Activated T-helper 1 cell treated with anti-CD3 and anti-CD28 coated beads, Interleukin-12 subunit alpha, Interleukin-12 subunit beta, Interleukin-2, Interleukin-4 antibody, amounts not matched to agents 30 ng/mL and 10 ng/mL and 1 ng/mL, durations not matched to agents 14 hours and 24 hours and 36 hours (primary cell): ENCODE measurements at regions of chr10 and their contacts with region 1.

Region 1: GRCh38 chr10:79195091-79195923 is 126.5 kb downstream of the ZMIZ1 start:
- DNase-seq: peak; percentile 67
- H3K4me3 Mint-ChIP-seq: no peak overlapping the region
- H3K27ac Mint-ChIP-seq: no peak overlapping the region
- H3K4me1 Mint-ChIP-seq: peaks cover 6% of the 10 kb centered on the region
- H3K27me3 Mint-ChIP-seq: peaks cover 3% of the 10 kb centered on the region

Region 2: GRCh38 chr10:77846718-77847630 is 1348.3 kb before region 1 on chr10:
- intact Hi-C with region 1: loop called (anchors 2 kb)
- DNase-seq: peak; percentile 37
- H3K4me3 Mint-ChIP-seq: no peak overlapping the region
- H3K27ac Mint-ChIP-seq: no peak overlapping the region
- H3K4me1 Mint-ChIP-seq: peaks cover 5% of the 10 kb centered on the region
- H3K27me3 Mint-ChIP-seq: no peaks in the 10 kb centered on the region

Region 3: DNA sequence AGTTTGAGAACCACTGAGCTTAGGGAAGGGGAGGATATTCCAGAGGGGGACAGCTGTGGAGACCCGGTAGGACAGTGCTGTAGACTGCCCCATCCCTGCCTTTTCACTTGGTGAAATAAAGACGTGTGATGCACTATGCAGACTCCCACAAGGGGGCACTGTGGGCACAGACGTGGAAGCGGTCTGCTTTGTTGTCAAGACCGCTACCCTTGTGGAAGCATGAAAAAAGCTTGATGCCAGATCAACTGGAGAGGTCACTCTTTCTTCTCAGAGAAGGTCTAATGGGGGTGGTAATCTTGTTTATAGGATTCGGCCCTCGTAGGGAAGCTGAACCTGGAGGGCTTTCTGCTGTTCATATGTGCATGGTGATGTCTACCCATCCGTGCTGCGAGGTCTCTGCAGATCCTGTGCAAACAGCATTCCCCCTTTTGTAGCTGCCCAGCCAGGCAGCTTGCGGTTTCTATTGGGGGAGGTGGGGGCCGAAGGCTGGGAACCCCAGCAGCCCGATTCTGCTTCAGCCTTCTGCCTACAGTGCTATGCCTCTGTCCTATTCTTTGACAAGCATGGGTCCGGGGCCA is 1147.9 kb before region 1 on chr10:
- intact Hi-C with region 1: loop called (anchors 1 kb)
- DNase-seq: peak; percentile 61
- H3K4me3 Mint-ChIP-seq: no peak overlapping the region
- H3K27ac Mint-ChIP-seq: no peak overlapping the region
- H3K4me1 Mint-ChIP-seq: peaks cover 30% of the 10 kb centered on the region
- H3K27me3 Mint-ChIP-seq: no peaks in the 10 kb centered on the region

Region 4: DNA sequence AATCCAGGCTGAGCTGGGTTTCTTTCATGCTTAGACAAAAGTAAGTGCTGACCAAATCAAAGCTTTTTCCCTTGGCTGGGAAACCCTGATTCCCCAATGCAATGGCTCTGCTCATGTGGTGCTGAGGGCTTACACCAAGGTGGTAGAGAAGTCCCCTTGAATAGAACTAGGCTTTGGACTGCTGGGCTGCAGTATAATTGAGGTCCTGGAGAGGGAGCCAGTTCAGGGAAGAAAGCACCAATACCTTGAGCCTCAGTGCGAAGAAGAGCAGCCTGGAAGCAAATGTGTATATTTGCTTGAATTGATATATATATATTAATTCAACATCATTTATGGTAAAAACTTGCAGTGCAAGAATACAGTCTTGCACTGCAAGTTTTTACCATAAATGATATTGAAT is 770.6 kb before region 1 on chr10:
- intact Hi-C with region 1: loop called (anchors 1 kb)
- DNase-seq: no peak
- H3K4me3 Mint-ChIP-seq: no peak overlapping the region
- H3K27ac Mint-ChIP-seq: no peak overlapping the region
- H3K4me1 Mint-ChIP-seq: no peaks in the 10 kb centered on the region
- H3K27me3 Mint-ChIP-seq: peaks cover 20% of the 10 kb centered on the region

Region 5: DNA sequence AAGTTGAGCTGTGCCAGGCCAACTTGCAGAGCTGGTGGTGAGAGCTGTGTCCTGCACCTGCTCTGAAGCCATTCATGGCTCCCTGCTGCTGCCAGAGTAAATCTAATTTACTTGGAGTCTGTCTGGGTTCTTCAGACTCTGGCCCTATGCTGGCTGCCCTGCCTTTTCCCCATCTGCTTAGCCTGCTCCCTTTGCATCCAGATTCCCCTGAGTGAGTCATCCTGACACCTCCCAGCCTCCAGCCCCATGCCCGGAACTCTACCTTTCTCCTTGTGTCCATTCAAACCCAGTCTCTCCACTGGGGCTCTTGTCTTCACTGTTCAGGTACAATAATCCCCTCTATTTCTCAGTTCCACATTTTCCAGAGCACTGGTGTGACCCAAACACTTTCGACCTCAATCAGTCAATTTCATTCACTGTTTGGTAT is 560.9 kb before region 1 on chr10:
- intact Hi-C with region 1: no loop called
- DNase-seq: no peak
- H3K4me3 Mint-ChIP-seq: no peak overlapping the region
- H3K27ac Mint-ChIP-seq: no peak overlapping the region
- H3K4me1 Mint-ChIP-seq: no peaks in the 10 kb centered on the region
- H3K27me3 Mint-ChIP-seq: peaks cover 2% of the 10 kb centered on the region

Region 6: GRCh38 chr10:78657163-78657861 is 538.0 kb before region 1 on chr10:
- intact Hi-C with region 1: loop called (anchors 1 kb)
- DNase-seq: peak; percentile 45
- H3K4me3 Mint-ChIP-seq: no peak overlapping the region
- H3K27ac Mint-ChIP-seq: no peak overlapping the region
- H3K4me1 Mint-ChIP-seq: no peaks in the 10 kb centered on the region
- H3K27me3 Mint-ChIP-seq: peaks cover 4% of the 10 kb centered on the region

Region 7: GRCh38 chr10:78937800-78938694 is 257.3 kb before region 1 on chr10:
- intact Hi-C with region 1: loop called (anchors 5 kb)
- DNase-seq: no peak
- H3K4me3 Mint-ChIP-seq: no peak overlapping the region
- H3K27ac Mint-ChIP-seq: no peak overlapping the region
- H3K4me1 Mint-ChIP-seq: no peaks in the 10 kb centered on the region
- H3K27me3 Mint-ChIP-seq: peaks cover 3% of the 10 kb centered on the region